Posterior vena cava (tissue), 2 donors: ENCODE measurements at regions of chr20 and their contacts with region 1.

Region 1: GRCh38 chr20:839015-839414 is 5.5 kb downstream of the FAM110A start:
- DNase-seq: peak; percentile 4

Region 2: DNA sequence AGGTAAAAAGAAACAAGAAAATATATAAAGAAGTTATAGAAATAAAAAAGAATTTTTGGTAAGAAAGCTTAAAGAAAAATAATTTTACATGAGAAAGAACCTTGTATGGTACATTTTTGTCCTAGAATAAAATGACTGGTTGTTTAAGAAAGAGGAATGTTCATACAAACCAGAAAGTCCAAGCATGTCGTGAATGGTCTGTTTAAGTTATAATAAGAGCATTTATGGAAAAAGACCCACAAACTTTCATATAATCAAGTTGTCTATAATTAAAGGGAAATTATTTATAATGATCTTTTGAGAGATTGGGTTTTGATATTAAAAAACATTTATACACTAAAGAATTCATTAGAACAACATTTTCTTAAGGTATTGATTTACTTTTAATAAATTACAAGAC is 33.3 kb before region 1 on chr20:
- intact Hi-C with region 1: no loop called
- DNase-seq: no peak

Region 3: DNA sequence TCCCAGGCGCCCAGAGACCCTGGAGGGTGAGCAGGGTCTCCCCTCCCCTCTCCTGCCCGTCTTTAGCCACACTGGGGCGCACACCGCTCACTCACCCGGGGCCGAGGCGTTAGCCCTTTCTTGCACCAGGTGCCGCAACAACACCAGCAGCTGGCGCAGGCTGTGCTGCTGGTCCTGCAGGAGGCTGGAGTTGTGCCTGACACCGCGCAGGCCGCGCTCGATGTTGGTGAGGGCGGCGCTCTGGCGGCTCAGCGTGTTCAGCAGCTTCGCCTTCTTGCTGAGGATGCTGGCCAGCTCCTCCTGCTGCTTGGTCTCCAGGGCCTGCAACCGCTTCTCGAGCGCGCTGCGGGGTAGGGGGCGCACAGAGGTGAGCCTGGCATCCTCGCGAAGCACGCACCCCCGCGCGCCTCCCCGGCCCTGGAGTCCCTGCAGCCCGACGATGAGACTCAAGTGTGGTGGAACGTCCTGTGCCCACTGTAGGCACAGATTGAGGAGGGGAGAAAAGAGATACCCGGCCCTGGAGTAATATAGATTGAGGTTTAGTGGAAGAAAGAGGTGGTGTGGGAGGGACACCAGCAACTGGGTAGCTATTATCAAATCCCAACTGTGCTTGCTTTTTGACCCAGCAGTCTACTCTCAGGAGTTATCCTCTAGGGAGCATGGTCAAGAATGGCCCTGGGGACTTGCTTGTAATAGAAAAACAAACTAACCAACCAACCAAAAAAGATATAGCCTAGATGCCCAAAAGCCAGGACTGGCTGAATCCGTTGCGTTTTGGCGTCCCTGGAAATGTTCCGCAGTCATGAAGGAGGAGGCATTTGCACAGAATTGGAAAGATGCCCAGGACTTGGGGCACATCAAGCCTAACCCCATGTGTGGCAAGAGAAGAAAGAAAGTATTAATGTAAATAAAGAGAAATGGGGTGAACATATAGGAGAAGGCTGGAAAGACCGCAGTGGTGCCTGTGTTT is 46.3 kb after region 1 on chr20:
- intact Hi-C with region 1: loop called in 1 of 2 experiments (anchors 1 kb)
- DNase-seq: peak; percentile 83

Region 4: GRCh38 chr20:1402149-1402548 is 563.1 kb after region 1 on chr20:
- intact Hi-C with region 1: no loop called
- DNase-seq: no peak